Cardiac septum (tissue), 1 donor: ENCODE measurements at regions of chr2 and their contacts with region 1.

Region 1: GRCh38 chr2:8779795-8780671 is 57.4 kb downstream of the KIDINS220 start:
- DNase-seq: no peak

Region 2: DNA sequence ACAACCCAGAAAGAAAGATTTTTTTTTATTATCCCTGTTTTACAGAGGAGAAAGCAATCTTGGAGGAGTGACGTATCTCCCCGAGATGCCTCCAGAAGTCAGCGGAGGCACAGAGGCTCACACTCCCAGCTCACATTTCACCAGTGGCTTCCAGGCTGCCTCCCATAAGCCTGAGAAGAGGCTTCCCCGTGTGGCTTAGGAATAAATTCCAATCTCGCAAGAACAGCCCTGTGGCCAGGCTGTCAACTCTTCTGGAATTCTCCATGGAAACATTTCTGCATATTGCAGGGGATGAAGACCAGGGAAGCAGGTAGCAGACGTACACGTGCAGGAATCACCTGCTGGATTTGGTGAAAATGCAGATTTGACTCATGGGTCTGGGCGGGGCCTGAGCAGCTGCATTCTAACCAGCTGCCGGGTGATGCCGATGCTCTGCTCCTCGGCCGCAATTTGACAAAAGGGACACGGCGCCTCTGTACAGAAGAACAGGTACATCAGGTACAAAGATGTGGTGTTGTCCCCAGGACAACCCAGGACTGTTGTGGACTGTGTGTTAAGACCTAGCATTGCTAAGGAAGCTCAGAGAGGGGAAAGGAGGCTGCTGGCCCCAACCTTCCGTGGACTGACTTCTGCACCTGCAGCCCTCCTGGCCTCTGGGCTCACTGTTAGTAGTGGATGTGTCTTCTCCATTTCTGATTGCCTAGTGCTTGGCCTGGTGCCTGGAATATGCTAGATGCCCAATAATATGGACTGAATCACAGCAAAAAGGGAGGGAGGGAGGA is 212.4 kb before region 1 on chr2:
- intact Hi-C with region 1: no loop called
- DNase-seq: no peak

Region 3: GRCh38 chr2:8729939-8730338 is 50.1 kb before region 1 on chr2:
- intact Hi-C with region 1: loop called (anchors 5 kb)
- DNase-seq: peak; percentile 83

Region 4: DNA sequence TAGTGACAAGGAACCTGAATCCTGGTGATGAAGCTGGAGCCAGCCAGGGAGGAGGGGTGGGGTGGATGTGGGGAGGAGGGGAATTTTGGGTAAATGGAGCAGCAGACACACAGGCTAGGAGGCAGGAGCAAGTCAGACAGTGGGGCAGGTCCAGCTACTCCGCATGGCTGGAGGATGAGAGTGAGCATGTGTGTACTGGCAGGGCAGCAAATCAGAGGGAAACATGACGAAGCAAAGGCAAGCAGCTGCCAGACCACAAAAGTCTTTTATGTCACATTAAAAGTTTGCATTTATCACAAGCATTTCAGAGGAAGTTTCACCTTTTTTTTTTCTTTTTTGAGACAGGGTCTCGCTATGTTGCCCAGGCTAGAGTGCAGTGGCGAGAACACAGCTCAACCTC is 69.3 kb after region 1 on chr2:
- intact Hi-C with region 1: no loop called
- DNase-seq: no peak